ENCODE measurements at regions of chr14 and their contacts with region 1.

Region 1: DNA sequence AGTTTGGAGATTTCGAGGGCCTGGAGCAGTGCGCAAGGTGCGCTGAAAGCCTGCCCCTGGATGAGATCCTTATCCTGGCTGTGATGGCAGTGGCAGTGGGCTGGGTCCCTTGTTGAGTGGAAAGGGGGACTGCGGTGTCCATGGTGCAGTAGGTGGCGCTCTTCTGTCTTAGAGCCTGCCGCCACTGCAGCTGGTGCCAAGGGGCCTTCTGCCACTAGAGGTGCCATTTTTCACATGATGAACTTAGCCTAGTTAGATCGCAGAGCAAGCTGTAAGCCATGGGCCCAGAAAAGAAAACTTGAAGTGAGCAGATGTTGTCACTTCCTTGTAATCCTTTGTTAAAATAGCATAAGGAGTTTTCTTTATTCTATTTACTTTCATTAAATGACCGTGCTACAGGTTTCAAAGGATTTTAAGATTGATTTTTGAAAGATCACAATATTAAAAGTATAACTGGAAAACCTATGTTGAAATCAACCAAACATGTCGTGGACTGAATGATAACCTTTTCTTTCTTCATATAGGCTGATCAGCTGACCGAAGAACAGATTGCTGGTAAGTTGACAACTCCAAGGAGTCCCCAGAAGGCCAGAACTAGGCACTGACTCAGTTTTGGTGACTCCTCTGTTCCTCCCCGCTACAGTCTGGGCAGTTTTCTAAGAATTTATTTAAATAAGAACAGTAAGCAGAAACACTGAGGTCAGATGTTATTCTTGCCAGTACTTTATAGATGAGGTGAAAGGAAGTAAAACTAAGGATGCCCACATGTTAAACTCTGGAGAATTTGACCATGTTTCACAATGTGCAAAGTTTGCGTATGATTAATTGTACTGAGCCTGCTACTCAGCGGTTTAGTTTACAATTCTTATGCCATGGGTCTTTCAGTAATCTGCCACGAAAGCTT is 3.0 kb downstream of the CALM1 start:
- DNase-seq: peak; percentile 92
- H3K4me3 Mint-ChIP-seq: peak overlapping the region; percentile 97
- H3K27ac Mint-ChIP-seq: peak overlapping the region; percentile 99
- H3K4me1 Mint-ChIP-seq: peaks cover 52% of the 10 kb centered on the region
- H3K27me3 Mint-ChIP-seq: no peaks in the 10 kb centered on the region

Region 2: DNA sequence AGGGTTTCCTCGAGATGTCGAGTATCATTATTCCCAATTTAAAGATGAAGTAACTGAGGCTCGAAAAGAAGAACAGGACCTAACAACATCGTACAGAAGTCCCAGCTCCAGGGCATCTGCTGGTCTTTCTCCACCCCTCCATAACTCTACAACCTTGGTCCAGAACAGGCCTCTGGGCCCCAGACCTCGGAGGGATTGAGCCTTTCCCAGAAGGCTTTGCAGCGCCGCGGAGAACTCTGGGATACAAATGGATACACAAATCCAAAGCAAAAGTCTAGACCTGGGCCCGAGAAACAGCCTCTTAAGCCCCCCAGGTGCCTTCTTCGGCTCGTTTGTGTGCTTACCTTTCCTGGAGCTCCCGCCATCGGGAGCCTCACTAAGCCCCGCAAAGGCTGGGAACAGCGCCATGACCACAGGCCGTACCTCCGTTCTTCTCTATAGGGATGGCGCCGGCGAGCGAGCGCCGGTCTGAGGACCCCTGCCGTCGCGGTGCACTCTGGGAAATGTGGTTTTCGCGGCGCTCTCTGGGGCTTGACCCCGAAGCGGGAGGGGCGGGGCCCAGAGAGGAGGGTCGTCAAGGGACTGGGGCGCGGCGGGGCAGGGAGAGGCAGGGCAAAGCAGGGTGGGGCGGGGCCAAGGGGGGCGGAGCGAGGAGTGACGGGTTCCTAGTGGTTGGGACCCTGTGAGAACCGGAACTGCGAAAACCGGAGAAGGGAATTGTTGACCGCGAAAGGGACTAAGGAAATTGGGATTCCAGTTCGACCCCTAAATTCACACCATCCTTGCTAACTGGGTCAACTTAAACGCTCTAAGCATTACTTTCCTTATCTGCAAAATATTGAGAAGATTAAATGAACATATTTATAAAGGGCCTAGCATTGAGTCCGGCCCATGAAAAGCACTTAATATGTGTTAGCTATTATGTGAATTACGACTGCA is 68.0 kb before region 1 on chr14 and contains the start of gene NRDE2:
- CTCF ChIA-PET with region 1: interaction called, 3 read pairs
- POLR2A ChIA-PET with region 1: interaction called, 4 read pairs
- intact Hi-C with region 1: loop called (anchors 1 kb)
- DNase-seq: peak; percentile 99
- H3K4me3 Mint-ChIP-seq: peak within 1 kb of the TSS; percentile 88
- H3K27ac Mint-ChIP-seq: peak within 1 kb of the TSS; percentile 91
- H3K4me1 Mint-ChIP-seq: peaks cover 26% of the 10 kb centered on the region
- H3K27me3 Mint-ChIP-seq: peaks cover 3% of the 10 kb centered on the region
- total RNA-seq, gene NRDE2: 18.9 to 24.8 TPM

Region 3: DNA sequence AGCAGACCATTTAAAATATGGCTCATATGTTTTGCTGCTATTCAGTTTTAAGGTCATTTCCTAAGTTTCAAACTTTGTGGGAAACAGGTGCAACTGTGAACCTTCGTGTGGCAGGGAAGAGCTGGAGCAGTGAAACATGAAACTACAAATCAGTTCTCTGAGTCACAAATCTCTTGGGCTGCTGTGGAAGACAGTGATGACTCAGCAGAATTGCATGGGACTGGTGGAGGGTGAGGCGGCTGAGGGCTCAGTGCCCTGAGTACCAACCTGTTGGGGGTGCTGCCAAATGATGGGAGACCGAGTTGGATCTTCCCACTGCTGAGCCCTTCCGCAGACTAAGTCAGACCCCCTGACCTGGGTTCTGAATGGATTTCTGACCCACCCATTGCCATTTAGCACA is 11.4 kb before region 1 on chr14:
- CTCF ChIA-PET with region 1: interaction called, 80 read pairs
- POLR2A ChIA-PET with region 1: interaction called, 159 read pairs
- intact Hi-C with region 1: loop called (anchors 1 kb)
- DNase-seq: peak; percentile 38
- H3K4me3 Mint-ChIP-seq: no peak overlapping the region
- H3K27ac Mint-ChIP-seq: peak overlapping the region; percentile 6
- H3K4me1 Mint-ChIP-seq: peaks cover 39% of the 10 kb centered on the region
- H3K27me3 Mint-ChIP-seq: no peaks in the 10 kb centered on the region

Region 4: DNA sequence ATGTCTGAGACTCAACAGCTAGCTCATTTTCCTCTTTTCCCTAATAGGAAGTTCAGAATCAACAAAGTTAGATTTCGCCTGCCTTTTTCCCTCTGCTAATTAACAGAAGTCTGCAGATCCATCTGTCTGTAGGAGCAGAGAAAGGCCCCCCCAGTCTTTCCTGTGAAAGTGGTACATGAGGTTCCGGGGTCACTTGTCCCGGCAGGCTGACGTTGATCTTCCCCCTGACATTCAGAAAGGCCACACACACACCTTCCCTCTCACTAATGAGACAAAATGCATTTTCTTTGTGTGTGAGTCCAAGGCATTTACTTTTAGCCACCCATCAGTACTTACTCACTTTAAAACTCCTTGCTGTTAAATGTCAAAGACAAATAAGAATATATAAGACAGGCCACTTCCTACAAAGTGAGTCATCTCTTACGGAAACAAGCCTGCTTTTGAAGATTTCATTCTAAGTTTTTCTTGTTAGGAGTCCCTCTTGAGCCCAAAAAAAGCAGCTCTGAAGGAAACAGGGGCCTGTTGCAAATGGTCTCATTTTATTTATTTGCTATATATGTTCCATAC is 277.8 kb after region 1 on chr14:
- CTCF ChIA-PET with region 1: no interaction called
- POLR2A ChIA-PET with region 1: no interaction called
- intact Hi-C with region 1: loop called (anchors 5 kb)
- DNase-seq: peak; percentile 31
- H3K4me3 Mint-ChIP-seq: no peak overlapping the region
- H3K27ac Mint-ChIP-seq: peak overlapping the region; percentile 85
- H3K4me1 Mint-ChIP-seq: peaks cover 35% of the 10 kb centered on the region
- H3K27me3 Mint-ChIP-seq: no peaks in the 10 kb centered on the region

Region 5: GRCh38 chr14:90778571-90779240 is 378.9 kb after region 1 on chr14:
- CTCF ChIA-PET with region 1: no interaction called
- POLR2A ChIA-PET with region 1: no interaction called
- intact Hi-C with region 1: no loop called
- DNase-seq: no peak
- H3K4me3 Mint-ChIP-seq: no peak overlapping the region
- H3K27ac Mint-ChIP-seq: no peak overlapping the region
- H3K4me1 Mint-ChIP-seq: no peaks in the 10 kb centered on the region
- H3K27me3 Mint-ChIP-seq: no peaks in the 10 kb centered on the region

Region 6: DNA sequence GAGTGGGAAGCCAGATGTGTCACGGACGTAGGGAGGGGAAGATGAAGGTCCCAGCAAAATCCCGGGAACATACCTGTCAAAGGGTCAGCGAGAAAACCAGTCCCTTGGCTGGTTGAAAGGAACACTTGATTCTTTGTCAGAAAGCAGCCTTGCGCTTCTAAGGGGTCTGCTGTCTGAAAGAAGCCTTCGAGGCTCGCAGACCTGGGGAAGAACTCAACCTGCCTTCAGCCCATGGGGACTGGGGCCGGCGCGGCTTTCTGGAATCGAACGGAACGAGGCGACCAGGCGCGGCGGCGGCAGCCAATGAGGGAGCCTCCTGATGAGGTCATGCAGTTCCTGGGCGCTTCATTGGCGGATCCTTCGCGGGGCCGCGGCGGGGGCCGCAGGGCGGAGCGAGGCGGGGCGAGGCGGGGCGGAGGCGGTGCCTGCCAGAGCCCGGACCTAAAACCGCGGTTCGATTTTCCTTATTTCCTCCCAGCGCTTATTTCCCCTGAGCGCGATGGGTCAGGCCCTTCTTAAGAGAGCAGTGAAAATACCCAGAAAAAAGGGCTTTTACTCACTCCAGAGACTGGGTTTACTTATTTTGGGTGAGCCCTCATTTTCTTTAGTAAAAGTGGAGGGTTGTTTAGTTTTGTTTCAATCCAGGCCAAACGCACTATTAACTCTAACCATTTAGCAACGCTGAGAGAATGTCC is 428.3 kb after region 1 on chr14:
- CTCF ChIA-PET with region 1: no interaction called
- POLR2A ChIA-PET with region 1: no interaction called
- intact Hi-C with region 1: loop called (anchors 2 kb)
- DNase-seq: peak; percentile 96
- H3K4me3 Mint-ChIP-seq: peak overlapping the region; percentile 80
- H3K27ac Mint-ChIP-seq: peak overlapping the region; percentile 88
- H3K4me1 Mint-ChIP-seq: peaks cover 21% of the 10 kb centered on the region
- H3K27me3 Mint-ChIP-seq: no peaks in the 10 kb centered on the region

Measured in activated CD4-positive, alpha-beta memory T cell treated with anti-CD3 and anti-CD28 coated beads for 36 hours (primary cell).